ENCODE measurements at regions of chr11 and their contacts with region 1.

Region 1: GRCh38 chr11:116993599-116993998 is 104.6 kb downstream of the SIK3 start:
- DNase-seq: peak in 4 of 9 experiments; percentile 38 to 87 (median 58)
- ATAC-seq: peak; percentile 69
- H3K4me3 ChIP-seq: no peak overlapping the region
- H3K4me3 Mint-ChIP-seq: peak overlapping the region; percentile 35
- H3K27ac ChIP-seq: peak overlapping the region; percentile 38 to 62
- H3K27ac Mint-ChIP-seq: peak overlapping the region; percentile 62
- H3K4me1 ChIP-seq: peaks cover 31% of the 10 kb centered on the region
- H3K4me1 Mint-ChIP-seq: peaks cover 65% of the 10 kb centered on the region
- H3K27me3 ChIP-seq: no peaks in the 10 kb centered on the region
- H3K27me3 Mint-ChIP-seq: no peaks in the 10 kb centered on the region
- CTCF ChIP-seq: no peak

Region 2: DNA sequence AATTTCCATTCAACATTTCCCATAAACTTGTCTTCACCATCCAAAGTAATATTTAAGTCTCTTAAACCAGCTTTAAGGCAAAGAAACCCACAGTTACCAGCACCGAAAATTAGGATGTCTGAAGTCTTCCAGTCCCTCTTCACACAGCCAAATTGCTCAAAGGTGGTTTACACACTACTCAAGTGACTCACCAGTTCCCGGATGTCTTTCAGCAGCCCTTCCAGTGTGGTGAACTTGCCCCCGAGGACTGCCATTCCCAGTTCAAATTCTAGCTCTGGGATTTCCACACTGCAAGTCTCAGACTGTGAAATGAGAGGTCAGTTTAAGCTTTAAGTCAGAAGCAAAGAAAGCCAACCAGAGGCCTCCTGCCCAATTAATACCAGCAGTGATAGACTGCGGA is 210.9 kb before region 1 on chr11:
- CTCF ChIA-PET with region 1: no interaction called
- POLR2A ChIA-PET with region 1: no interaction called
- intact Hi-C with region 1: no loop called
- DNase-seq: peak in 1 of 9 experiments; percentile 24
- ATAC-seq: no peak
- H3K4me3 ChIP-seq: no peak overlapping the region
- H3K4me3 Mint-ChIP-seq: no peak overlapping the region
- H3K27ac ChIP-seq: no peak overlapping the region
- H3K27ac Mint-ChIP-seq: no peak overlapping the region
- H3K4me1 ChIP-seq: peaks cover 18% of the 10 kb centered on the region
- H3K4me1 Mint-ChIP-seq: peaks cover 48% of the 10 kb centered on the region
- H3K27me3 ChIP-seq: no peaks in the 10 kb centered on the region
- H3K27me3 Mint-ChIP-seq: no peaks in the 10 kb centered on the region
- CTCF ChIP-seq: no peak

Region 3: DNA sequence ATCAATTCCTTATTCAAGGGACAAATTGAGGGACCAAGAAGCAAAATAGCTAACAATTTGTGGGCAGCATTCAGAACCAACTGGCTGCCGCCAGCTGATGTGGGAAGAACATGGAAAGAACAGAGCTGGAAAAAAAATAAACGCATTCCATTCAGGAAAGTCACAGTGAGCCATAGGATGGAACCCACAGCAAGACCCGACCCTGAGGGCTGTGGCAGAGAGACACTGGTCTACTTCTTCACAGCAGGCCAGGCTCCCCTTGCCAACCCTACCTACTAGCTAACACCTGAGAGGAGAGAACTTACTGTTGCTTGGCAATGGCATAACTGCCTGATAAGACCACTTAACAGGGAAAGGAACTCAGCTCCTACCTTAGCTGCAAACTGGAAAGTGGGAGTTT is 32.7 kb before region 1 on chr11:
- CTCF ChIA-PET with region 1: no interaction called
- POLR2A ChIA-PET with region 1: no interaction called
- intact Hi-C with region 1: loop called in 1 of 2 experiments (anchors 5 kb)
- DNase-seq: no peak
- ATAC-seq: no peak
- H3K4me3 ChIP-seq: no peak overlapping the region
- H3K4me3 Mint-ChIP-seq: no peak overlapping the region
- H3K27ac ChIP-seq: no peak overlapping the region
- H3K27ac Mint-ChIP-seq: peak overlapping the region; percentile 46
- H3K4me1 ChIP-seq: peaks cover 3% of the 10 kb centered on the region
- H3K4me1 Mint-ChIP-seq: peaks cover 56% of the 10 kb centered on the region
- H3K27me3 ChIP-seq: no peaks in the 10 kb centered on the region
- H3K27me3 Mint-ChIP-seq: no peaks in the 10 kb centered on the region
- CTCF ChIP-seq: no peak